ENCODE measurements at regions of chr7 and their contacts with region 1.

Region 1: DNA sequence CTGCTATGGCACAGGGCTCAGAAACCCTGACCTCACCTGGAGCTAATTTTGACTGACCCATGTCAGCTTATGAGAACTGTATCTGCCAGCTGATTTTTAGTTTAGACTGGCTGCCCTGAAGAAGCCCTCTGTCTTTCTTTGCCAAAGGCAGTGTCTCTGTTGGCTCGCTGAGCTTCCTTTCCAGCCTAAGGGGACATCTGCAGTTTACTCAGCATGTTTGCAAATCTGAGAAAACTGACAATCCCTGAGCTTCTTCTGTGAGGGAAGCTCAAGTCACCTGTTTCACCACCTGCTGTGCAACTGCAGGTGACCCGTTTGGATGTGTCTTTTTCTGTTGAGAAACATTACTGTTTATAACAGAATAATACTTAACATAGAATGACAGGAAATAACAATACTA is 46.0 kb downstream of the PRKAR2B start:
- DNase-seq: peak; percentile 98
- H3K4me3 ChIP-seq: peak overlapping the region; percentile 83
- H3K27ac ChIP-seq: peak overlapping the region; percentile 100
- H3K4me1 ChIP-seq: peaks cover 72% of the 10 kb centered on the region
- CTCF ChIP-seq: no peak; the same call in 1 of the 2 replicates

Region 2: GRCh38 chr7:106947244-106947728 is 143.2 kb before region 1 on chr7:
- CTCF ChIA-PET with region 1: interaction called, 3 read pairs
- POLR2A ChIA-PET with region 1: interaction called, 3 read pairs
- intact Hi-C with region 1: loop called (anchors 1 kb)
- DNase-seq: peak; percentile 92
- H3K4me3 ChIP-seq: no peak overlapping the region
- H3K27ac ChIP-seq: no peak overlapping the region
- H3K4me1 ChIP-seq: peaks cover 18% of the 10 kb centered on the region
- CTCF ChIP-seq: peak; percentile 99

Region 3: DNA sequence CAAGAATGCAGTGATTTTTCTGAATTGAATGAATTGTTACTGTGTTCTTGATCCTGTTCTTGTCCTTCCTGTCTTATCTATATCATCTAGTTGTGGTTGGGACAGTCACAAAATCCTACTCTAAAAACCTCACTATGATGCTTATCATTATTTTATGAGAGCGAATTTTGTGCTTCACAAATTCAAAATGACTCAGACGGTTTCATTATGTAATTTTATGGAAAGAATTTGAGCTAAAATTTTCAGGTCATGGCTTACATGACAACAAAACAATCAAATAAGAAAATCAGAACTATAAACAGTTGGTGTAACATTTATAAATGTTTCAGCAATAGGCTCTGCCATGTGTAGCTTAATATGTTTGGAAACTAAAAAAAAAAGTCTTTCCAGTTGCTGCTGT is 39.1 kb before region 1 on chr7:
- CTCF ChIA-PET with region 1: interaction called, 12 read pairs
- POLR2A ChIA-PET with region 1: interaction called, 29 read pairs
- intact Hi-C with region 1: loop called (anchors 1 kb)
- DNase-seq: no peak
- H3K4me3 ChIP-seq: no peak overlapping the region
- H3K27ac ChIP-seq: no peak overlapping the region
- H3K4me1 ChIP-seq: peaks cover 77% of the 10 kb centered on the region
- CTCF ChIP-seq: no peak

Region 4: DNA sequence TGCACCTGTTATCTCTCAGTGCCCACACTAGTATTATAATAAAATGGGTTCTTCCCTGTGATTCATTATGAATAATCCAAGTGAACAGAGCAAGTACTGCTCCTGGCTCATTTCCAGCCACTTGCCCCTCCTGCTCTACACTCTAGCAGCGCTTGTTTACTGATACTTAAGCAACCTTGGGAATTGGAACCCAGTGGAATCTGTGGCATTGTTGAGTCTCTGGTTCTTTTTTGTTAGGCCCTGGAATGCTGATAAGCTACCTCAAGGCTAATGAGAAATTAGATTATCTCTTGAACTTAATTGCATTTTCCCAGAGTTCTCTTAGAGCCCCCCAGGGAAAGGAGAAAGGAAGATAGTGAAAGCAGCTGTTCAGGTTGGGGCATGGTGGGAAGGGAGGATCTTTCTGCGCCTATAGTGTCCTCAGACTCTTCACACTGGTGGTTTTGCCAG is 11.9 kb before region 1 on chr7:
- CTCF ChIA-PET with region 1: no interaction called
- POLR2A ChIA-PET with region 1: interaction called, 16 read pairs
- intact Hi-C with region 1: no loop called
- DNase-seq: no peak
- H3K4me3 ChIP-seq: no peak overlapping the region
- H3K27ac ChIP-seq: no peak overlapping the region
- H3K4me1 ChIP-seq: peaks cover 33% of the 10 kb centered on the region
- CTCF ChIP-seq: no peak

Region 5: DNA sequence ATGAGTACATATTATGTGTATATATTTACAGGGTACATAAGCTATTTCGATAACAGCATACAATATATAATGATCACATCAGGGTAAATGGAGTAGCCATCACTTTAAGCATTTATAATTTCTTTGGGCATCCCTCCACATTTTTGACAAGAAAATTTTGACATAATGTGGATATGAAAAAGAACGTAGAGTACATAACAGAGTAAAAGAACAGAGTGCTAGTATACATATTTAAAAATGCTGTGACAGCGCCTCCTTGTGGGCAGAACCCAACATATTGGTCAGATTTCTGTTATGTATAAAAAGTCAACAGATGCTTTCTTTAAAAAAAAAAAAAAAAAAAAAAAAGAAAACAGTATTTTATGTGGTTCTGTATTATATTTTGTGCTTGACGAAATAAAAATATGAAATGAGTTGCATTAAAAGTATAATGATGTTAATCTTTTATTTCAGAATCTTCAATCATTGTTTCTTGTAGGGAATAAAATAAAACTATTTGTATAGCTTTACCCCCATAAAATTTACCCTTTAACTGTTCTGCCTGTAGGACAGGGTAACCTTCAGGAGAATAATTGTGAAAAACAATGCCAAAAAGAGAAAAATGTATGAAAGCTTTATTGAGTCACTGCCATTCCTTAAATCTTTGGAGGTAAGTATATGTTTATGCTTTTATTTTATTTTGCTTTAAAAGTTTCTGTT is 60.1 kb after region 1 on chr7:
- CTCF ChIA-PET with region 1: interaction called, 5 read pairs
- POLR2A ChIA-PET with region 1: interaction called, 3 read pairs
- intact Hi-C with region 1: loop called (anchors 1 kb)
- DNase-seq: peak; percentile 84
- H3K4me3 ChIP-seq: no peak overlapping the region
- H3K27ac ChIP-seq: no peak overlapping the region
- H3K4me1 ChIP-seq: peaks cover 41% of the 10 kb centered on the region
- CTCF ChIP-seq: peak; percentile 95

Measured in OCI-LY7 (cell line).